Esophagus muscularis mucosa (tissue), 4 donors: ENCODE measurements at regions of chr11 and their contacts with region 1.

Region 1: DNA sequence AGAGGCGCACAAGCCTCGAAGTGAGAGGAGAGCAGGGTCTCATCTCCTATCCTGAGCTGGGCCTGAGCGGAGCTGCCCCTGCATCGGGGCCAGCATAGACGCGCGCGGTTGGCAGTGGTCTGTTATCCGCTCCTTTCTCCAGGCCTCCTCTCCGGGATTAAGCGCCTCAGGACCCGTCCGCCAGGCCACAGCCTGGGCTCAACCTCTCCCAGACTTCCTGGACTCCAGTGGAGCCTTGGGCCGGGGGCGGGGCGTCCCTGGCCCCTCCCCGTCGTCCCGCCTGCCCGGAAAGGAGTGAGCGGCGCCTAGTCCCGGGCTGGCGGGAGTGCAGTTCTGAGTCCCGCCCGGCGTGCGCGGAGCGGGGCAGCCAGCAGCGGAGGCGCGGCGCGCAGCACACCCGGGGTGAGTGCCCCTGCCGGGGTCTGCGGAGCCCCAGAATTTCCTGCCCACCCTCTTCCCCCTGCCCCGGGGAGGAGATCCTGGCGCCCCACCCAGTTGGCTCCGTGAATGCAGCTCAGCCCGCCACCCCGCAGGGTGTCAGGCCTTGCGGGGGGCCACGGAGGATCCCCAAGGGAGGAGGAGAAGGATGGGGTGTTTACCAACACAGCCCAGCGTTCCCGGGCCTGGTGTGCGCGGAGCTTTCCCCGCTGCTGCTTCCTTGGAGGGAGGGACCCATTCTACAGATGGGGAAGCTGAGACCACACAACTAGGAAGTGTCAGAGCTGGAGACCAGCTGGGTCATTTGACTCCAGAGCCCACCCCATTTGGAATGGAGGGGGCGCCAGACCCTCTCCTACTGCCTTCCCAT is at the start of gene TCIRG1:
- DNase-seq: peak; percentile 96
- H3K4me3 ChIP-seq: peak within 1 kb of the TSS; percentile 70 to 88 (median 76)
- H3K27ac ChIP-seq: peak within 1 kb of the TSS; percentile 87 to 92 (median 88)
- H3K4me1 ChIP-seq: peaks cover 42 to 82% (median 77%) of the 10 kb centered on the region in 4 donors
- H3K27me3 ChIP-seq: no peaks in the 10 kb centered on the region
- CTCF ChIP-seq: peak in 2 of 3 experiments; percentile 16 to 17
- EP300 ChIP-seq: no peak
- POLR2A ChIP-seq: peak; percentile 94
- total RNA-seq, gene TCIRG1: 61.6 to 124 (median 81.4) TPM

Region 2: DNA sequence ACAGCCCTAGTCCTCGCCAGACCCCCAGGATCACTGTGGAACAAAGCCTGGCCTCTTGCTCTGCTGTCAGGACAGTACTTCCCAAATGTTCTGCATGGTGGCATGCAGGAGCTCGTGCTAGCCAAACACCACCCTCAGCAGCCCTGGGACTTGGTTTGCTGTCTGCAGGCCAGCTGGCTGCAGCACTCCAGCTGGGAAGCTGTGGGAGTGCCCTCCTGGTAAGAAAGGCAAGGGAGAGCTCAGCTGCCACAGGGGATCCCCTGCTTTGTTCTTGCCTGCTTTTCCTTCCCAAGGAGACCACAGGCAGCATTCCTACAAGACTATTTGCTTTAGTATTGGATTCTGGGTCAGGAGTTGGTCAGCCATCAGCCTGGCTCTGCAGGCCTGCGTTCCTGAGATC is 27.8 kb after region 1 on chr11:
- intact Hi-C with region 1: no loop called
- DNase-seq: no peak
- H3K4me3 ChIP-seq: no peak overlapping the region
- H3K27ac ChIP-seq: no peak overlapping the region
- H3K4me1 ChIP-seq: no peaks in the 10 kb centered on the region
- H3K27me3 ChIP-seq: no peaks in the 10 kb centered on the region
- CTCF ChIP-seq: no peak
- EP300 ChIP-seq: no peak
- POLR2A ChIP-seq: no peak

Region 3: DNA sequence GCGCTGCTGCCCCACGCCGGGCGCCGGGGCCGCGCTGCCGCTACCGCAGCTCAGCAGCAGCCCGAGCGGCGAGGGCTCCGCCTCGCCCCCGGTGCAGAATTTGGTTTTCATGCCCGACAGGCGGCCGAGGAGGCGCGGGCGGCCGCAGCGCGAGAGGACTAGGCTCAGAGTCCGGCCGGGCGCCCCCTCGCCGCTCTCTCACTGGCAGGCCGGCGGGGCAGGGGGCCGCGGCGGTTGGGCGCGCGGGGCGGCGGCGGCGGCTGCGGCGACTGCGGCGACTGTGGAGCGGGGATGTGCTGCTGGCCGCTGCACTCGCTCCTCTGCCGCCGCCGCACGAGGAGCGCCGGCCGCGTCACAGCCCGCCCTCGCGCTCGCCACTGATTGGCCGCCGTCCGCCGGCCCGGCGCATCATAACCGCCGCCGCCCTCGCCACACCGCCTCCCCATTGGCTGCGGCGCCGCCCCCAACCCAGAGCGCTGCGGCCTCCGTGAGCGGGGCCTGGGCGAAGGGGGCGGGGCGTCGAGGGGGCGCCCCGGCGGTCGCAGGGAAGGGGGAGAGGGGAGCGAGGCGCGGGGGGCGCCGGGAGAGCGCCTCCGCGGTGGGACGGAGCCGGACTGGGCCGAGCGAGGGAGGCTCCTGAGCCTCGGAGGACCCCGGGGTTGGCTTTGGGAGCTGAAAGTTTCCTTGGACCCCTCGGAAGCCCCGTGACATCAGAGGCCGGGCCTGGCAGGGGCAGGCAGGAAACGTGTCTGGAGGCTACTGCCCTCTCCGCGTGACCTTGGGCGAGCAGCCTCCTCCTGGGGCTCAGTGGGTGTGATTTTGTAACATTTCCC is 82.4 kb after region 1 on chr11 and contains the start of gene CHKA:
- intact Hi-C with region 1: loop called (anchors 5 kb)
- DNase-seq: peak; percentile 96
- H3K4me3 ChIP-seq: peak within 1 kb of the TSS; percentile 66 to 97 (median 78)
- H3K27ac ChIP-seq: peak within 1 kb of the TSS; percentile 91 to 99 (median 96)
- H3K4me1 ChIP-seq: peaks cover 34 to 55% (median 49%) of the 10 kb centered on the region in 4 donors
- H3K27me3 ChIP-seq: no peaks in the 10 kb centered on the region
- CTCF ChIP-seq: peak in 1 of 3 experiments; percentile 3
- EP300 ChIP-seq: no peak
- POLR2A ChIP-seq: no peak
- total RNA-seq, gene CHKA: 13.8 to 20.3 (median 18.3) TPM

Region 4: GRCh38 chr11:68213555-68214174 is 174.7 kb after region 1 on chr11:
- intact Hi-C with region 1: loop called (anchors 2 kb)
- DNase-seq: peak; percentile 96
- H3K4me3 ChIP-seq: peak overlapping the region; percentile 78 to 93 (median 87)
- H3K27ac ChIP-seq: peak overlapping the region; percentile 99 to 100 (median 100)
- H3K4me1 ChIP-seq: peaks cover 37 to 50% (median 46%) of the 10 kb centered on the region in 4 donors
- H3K27me3 ChIP-seq: no peaks in the 10 kb centered on the region
- CTCF ChIP-seq: no peak
- EP300 ChIP-seq: no peak
- POLR2A ChIP-seq: peak; percentile 86